ENCODE measurements at regions of chr16 and their contacts with region 1.

Region 1: GRCh38 chr16:30429678-30430427 is at the start of gene DCTPP1:
- DNase-seq: peak; percentile 96
- H3K4me3 Mint-ChIP-seq: no peak within 1 kb of the TSS
- H3K27ac Mint-ChIP-seq: no peak within 1 kb of the TSS
- H3K4me1 Mint-ChIP-seq: peaks cover 31% of the 10 kb centered on the region
- H3K27me3 Mint-ChIP-seq: no peaks in the 10 kb centered on the region
- total RNA-seq, gene DCTPP1: 173 and 178 TPM in 2 replicates

Region 2: GRCh38 chr16:30445408-30446202 is 15.8 kb after region 1 on chr16 and contains the start of gene SEPHS2:
- intact Hi-C with region 1: loop called (anchors 1 kb)
- DNase-seq: peak; percentile 93
- H3K4me3 Mint-ChIP-seq: peak within 1 kb of the TSS; percentile 95
- H3K27ac Mint-ChIP-seq: peak within 1 kb of the TSS; percentile 97
- H3K4me1 Mint-ChIP-seq: peaks cover 42% of the 10 kb centered on the region
- H3K27me3 Mint-ChIP-seq: no peaks in the 10 kb centered on the region
- total RNA-seq, gene SEPHS2: 83.4 and 87.2 TPM in 2 replicates

Region 3: GRCh38 chr16:30458561-30459394 is 28.9 kb after region 1 on chr16:
- intact Hi-C with region 1: loop called (anchors 1 kb)
- DNase-seq: peak; percentile 88
- H3K4me3 Mint-ChIP-seq: peak overlapping the region; percentile 64
- H3K27ac Mint-ChIP-seq: peak overlapping the region; percentile 95
- H3K4me1 Mint-ChIP-seq: peaks cover 77% of the 10 kb centered on the region
- H3K27me3 Mint-ChIP-seq: no peaks in the 10 kb centered on the region

Region 4: GRCh38 chr16:30472328-30472942 is 42.6 kb after region 1 on chr16 and contains the start of gene ITGAL:
- intact Hi-C with region 1: loop called (anchors 1 kb)
- DNase-seq: peak; percentile 81
- H3K4me3 Mint-ChIP-seq: peak within 1 kb of the TSS; percentile 96
- H3K27ac Mint-ChIP-seq: peak within 1 kb of the TSS; percentile 95
- H3K4me1 Mint-ChIP-seq: peaks cover 60% of the 10 kb centered on the region
- H3K27me3 Mint-ChIP-seq: no peaks in the 10 kb centered on the region
- total RNA-seq, gene ITGAL: 259 and 287 TPM in 2 replicates

Region 5: GRCh38 chr16:30585400-30586189 is 155.7 kb after region 1 on chr16 and contains the start of gene ZNF785:
- intact Hi-C with region 1: no loop called
- DNase-seq: peak; percentile 93
- H3K4me3 Mint-ChIP-seq: peak within 1 kb of the TSS; percentile 89
- H3K27ac Mint-ChIP-seq: peak within 1 kb of the TSS; percentile 87
- H3K4me1 Mint-ChIP-seq: peaks cover 18% of the 10 kb centered on the region
- H3K27me3 Mint-ChIP-seq: no peaks in the 10 kb centered on the region
- total RNA-seq, gene ZNF785: 19.2 and 21.5 TPM in 2 replicates

Region 6: GRCh38 chr16:30602616-30603277 is 172.9 kb after region 1 on chr16:
- intact Hi-C with region 1: loop called (anchors 1 kb)
- DNase-seq: no peak
- H3K4me3 Mint-ChIP-seq: no peak overlapping the region
- H3K27ac Mint-ChIP-seq: peak overlapping the region; percentile 40
- H3K4me1 Mint-ChIP-seq: peaks cover 12% of the 10 kb centered on the region
- H3K27me3 Mint-ChIP-seq: no peaks in the 10 kb centered on the region

Region 7: GRCh38 chr16:30609926-30610839 is 180.3 kb after region 1 on chr16 and contains the start of gene ZNF689:
- intact Hi-C with region 1: loop called (anchors 1 kb)
- DNase-seq: peak; percentile 95
- H3K4me3 Mint-ChIP-seq: peak within 1 kb of the TSS; percentile 93
- H3K27ac Mint-ChIP-seq: peak within 1 kb of the TSS; percentile 96
- H3K4me1 Mint-ChIP-seq: peaks cover 19% of the 10 kb centered on the region
- H3K27me3 Mint-ChIP-seq: no peaks in the 10 kb centered on the region
- total RNA-seq, gene ZNF689: 14.7 TPM in 2 replicates

Region 8: GRCh38 chr16:30628627-30629540 is 199.0 kb after region 1 on chr16:
- intact Hi-C with region 1: loop called (anchors 1 kb)
- DNase-seq: peak; percentile 77
- H3K4me3 Mint-ChIP-seq: peak overlapping the region; percentile 52
- H3K27ac Mint-ChIP-seq: peak overlapping the region; percentile 71
- H3K4me1 Mint-ChIP-seq: peaks cover 10% of the 10 kb centered on the region
- H3K27me3 Mint-ChIP-seq: no peaks in the 10 kb centered on the region

Region 9: GRCh38 chr16:30748635-30749446 is 319.0 kb after region 1 on chr16:
- intact Hi-C with region 1: no loop called
- DNase-seq: peak; percentile 31
- H3K4me3 Mint-ChIP-seq: peak overlapping the region; percentile 93
- H3K27ac Mint-ChIP-seq: peak overlapping the region; percentile 79
- H3K4me1 Mint-ChIP-seq: peaks cover 19% of the 10 kb centered on the region
- H3K27me3 Mint-ChIP-seq: no peaks in the 10 kb centered on the region